HEK293 (cell line): ENCODE measurements at regions of chr11 and their contacts with region 1.

Region 1: GRCh38 chr11:123719452-123719851 is 22.0 kb downstream of the ZNF202 start:
- H3K4me3 ChIP-seq: no peak overlapping the region
- H3K27ac ChIP-seq: no peak overlapping the region
- H3K4me1 ChIP-seq: no peaks in the 10 kb centered on the region
- CTCF ChIP-seq: no peak

Region 2: DNA sequence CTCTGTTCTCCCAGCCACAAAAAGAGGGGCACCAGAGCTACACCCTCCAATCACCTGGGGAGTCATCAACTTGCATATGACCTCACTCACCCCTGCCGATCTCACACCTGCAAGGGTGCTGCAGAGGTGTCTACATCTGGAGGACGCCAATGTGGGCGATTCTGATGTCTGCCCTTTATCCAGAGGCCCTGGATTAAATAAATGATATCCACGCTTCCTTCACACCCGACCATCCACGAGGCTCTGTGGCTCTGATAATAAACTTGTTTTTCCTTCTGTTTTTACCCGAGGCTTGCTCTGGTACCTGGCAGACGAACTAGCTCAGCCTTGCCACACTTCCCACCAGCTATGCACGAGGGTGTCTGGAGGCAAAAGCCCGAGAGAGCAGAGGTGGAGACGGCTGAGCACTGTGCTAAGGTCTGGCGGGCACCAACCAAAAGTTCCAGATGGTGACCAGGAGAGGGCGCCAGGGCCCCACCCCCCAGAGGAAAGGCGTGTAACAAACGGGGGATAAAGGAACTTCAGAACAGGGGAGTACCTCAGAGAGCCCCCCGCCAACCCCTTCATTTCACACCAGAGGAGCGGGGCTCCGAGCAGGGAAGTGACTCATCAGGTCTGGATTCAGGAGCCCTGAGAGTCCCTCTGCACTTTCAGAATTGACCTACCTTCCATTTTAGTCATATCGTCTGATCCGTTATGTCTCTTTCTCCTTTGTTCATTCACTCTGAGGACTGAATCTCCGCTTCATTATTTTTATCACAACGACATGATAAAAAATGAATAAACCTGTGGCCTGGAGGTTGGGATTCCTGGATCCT is 78.6 kb before region 1 on chr11:
- CTCF ChIA-PET with region 1: interaction called, 11 read pairs
- POLR2A ChIA-PET with region 1: no interaction called
- H3K4me3 ChIP-seq: no peak overlapping the region
- H3K27ac ChIP-seq: no peak overlapping the region
- H3K4me1 ChIP-seq: no peaks in the 10 kb centered on the region
- CTCF ChIP-seq: peak; percentile 67; the same call in 1 of the 2 replicates

Region 3: DNA sequence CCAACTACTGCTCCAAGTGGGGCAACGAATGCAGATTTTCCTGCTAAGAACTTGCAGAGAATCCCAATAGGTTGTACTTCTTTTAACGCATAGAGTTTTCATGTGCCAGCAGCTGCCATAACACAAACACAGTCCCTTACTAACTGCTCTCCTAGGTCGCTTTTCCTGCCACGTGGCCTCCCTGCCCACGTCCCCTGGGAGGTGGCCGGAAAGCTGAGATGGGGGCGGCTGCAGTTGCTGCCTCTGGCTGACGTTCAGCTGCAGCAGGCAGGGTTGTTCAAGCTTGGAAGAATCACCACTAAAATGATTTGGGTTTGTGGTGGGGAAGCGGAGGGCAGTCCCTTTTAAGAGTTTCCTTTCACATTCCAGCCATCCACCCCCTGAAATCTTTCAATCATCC is 17.3 kb before region 1 on chr11:
- CTCF ChIA-PET with region 1: interaction called, 23 read pairs
- POLR2A ChIA-PET with region 1: interaction called, 11 read pairs
- H3K4me3 ChIP-seq: no peak overlapping the region
- H3K27ac ChIP-seq: no peak overlapping the region
- H3K4me1 ChIP-seq: peaks cover 2% of the 10 kb centered on the region; the same call in 1 of the 2 replicates
- CTCF ChIP-seq: no peak

Region 4: GRCh38 chr11:123841174-123841573 is 121.7 kb after region 1 on chr11:
- CTCF ChIA-PET with region 1: no interaction called
- POLR2A ChIA-PET with region 1: no interaction called
- H3K4me3 ChIP-seq: no peak overlapping the region
- H3K27ac ChIP-seq: no peak overlapping the region
- H3K4me1 ChIP-seq: no peaks in the 10 kb centered on the region
- CTCF ChIP-seq: no peak

Region 5: DNA sequence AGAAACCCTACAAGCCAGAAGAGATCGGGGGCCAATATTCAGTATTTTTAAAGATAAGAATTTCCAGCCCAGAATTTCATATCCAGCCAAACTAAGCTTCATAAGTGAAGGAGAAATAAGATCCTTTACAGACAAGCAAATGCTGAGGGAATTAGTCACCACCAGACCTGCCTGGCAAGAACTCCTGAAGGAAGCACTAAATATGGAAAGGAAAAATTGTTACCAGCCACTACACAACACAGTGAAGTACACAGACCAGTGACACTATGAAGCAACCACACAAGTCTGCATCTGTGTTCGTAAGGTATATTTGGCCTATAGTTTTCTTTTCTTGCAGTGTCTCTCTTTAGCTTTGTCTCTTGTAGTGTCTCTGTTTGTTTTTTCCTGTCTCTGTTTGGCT is 137.0 kb after region 1 on chr11:
- CTCF ChIA-PET with region 1: no interaction called
- POLR2A ChIA-PET with region 1: no interaction called
- H3K4me3 ChIP-seq: no peak overlapping the region
- H3K27ac ChIP-seq: no peak overlapping the region
- H3K4me1 ChIP-seq: no peaks in the 10 kb centered on the region
- CTCF ChIP-seq: no peak